ENCODE measurements at regions of chr3 and their contacts with region 1.

Region 1: GRCh38 chr3:136861890-136862616 is at the start of gene NCK1:
- DNase-seq: peak; percentile 92
- ATAC-seq: peak; percentile 94
- H3K4me3 Mint-ChIP-seq: peak within 1 kb of the TSS; percentile 93
- H3K27ac Mint-ChIP-seq: peak within 1 kb of the TSS; percentile 95
- H3K4me1 Mint-ChIP-seq: peaks cover 43% of the 10 kb centered on the region
- H3K27me3 Mint-ChIP-seq: no peaks in the 10 kb centered on the region
- CTCF ChIP-seq: no peak
- total RNA-seq, gene NCK1: 29.7 and 30.8 TPM in 2 replicates

Region 2: GRCh38 chr3:135771760-135772159 is 1090.3 kb before region 1 on chr3:
- CTCF ChIA-PET with region 1: no interaction called
- POLR2A ChIA-PET with region 1: no interaction called
- intact Hi-C with region 1: no loop called
- DNase-seq: no peak
- ATAC-seq: no peak
- H3K4me3 Mint-ChIP-seq: no peak overlapping the region
- H3K27ac Mint-ChIP-seq: no peak overlapping the region
- H3K4me1 Mint-ChIP-seq: no peaks in the 10 kb centered on the region
- H3K27me3 Mint-ChIP-seq: no peaks in the 10 kb centered on the region
- CTCF ChIP-seq: no peak

Region 3: GRCh38 chr3:136237103-136237502 is 625.0 kb before region 1 on chr3:
- CTCF ChIA-PET with region 1: no interaction called
- POLR2A ChIA-PET with region 1: no interaction called
- intact Hi-C with region 1: no loop called
- DNase-seq: no peak
- ATAC-seq: no peak
- H3K4me3 Mint-ChIP-seq: no peak overlapping the region
- H3K27ac Mint-ChIP-seq: no peak overlapping the region
- H3K4me1 Mint-ChIP-seq: no peaks in the 10 kb centered on the region
- H3K27me3 Mint-ChIP-seq: peaks cover 2% of the 10 kb centered on the region
- CTCF ChIP-seq: no peak

Region 4: GRCh38 chr3:136250226-136250902 is 611.7 kb before region 1 on chr3 and contains the start of gene PCCB:
- CTCF ChIA-PET with region 1: interaction called, 3 read pairs
- POLR2A ChIA-PET with region 1: interaction called, 3 read pairs
- intact Hi-C with region 1: loop called (anchors 1 kb)
- DNase-seq: peak; percentile 88
- ATAC-seq: peak; percentile 96
- H3K4me3 Mint-ChIP-seq: peak within 1 kb of the TSS; percentile 92
- H3K27ac Mint-ChIP-seq: peak within 1 kb of the TSS; percentile 95
- H3K4me1 Mint-ChIP-seq: peaks cover 23% of the 10 kb centered on the region
- H3K27me3 Mint-ChIP-seq: no peaks in the 10 kb centered on the region
- CTCF ChIP-seq: no peak
- total RNA-seq, gene PCCB: 31.2 and 31.8 TPM in 2 replicates

Region 5: DNA sequence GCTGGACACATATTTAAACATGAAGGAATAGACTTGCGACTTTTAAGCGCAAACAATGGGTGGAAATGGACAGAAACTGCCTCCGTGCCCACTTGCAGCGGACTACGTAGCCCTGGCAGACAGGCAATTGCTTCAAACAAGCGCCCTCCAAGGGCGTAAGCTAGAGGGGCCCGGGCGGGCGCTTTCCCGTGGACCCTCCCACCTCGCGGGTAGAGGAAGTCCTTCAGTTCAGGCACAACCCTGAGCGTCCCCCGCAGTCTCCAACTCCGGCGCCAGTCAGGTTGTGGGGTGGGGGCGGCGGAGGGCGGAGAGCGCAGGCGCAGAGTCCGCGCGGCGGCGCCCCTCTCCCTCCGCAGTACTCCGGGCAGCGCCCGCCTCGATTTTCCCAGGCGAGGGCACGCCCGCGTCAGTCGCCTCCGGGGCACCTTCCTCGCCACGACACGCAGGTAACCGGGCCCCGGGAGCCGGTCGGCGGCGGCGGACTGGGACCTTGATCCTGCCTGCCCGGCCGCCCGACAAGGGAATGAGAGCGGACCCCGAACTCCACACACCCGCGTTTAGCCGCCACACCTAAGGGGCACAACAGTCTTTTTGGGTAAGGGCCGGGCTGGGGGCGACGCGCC is 43.2 kb before region 1 on chr3 and contains the start of gene SLC35G2:
- CTCF ChIA-PET with region 1: no interaction called
- POLR2A ChIA-PET with region 1: interaction called, 11 read pairs
- intact Hi-C with region 1: loop called (anchors 1 kb)
- DNase-seq: peak; percentile 42
- ATAC-seq: peak; percentile 67
- H3K4me3 Mint-ChIP-seq: peak within 1 kb of the TSS; percentile 89
- H3K27ac Mint-ChIP-seq: peak within 1 kb of the TSS; percentile 87
- H3K4me1 Mint-ChIP-seq: peaks cover 22% of the 10 kb centered on the region
- H3K27me3 Mint-ChIP-seq: peaks cover 21% of the 10 kb centered on the region
- CTCF ChIP-seq: no peak
- total RNA-seq, gene SLC35G2: 4.2 and 4.3 TPM in 2 replicates

Region 6: GRCh38 chr3:136899622-136900158 is 37.6 kb after region 1 on chr3:
- CTCF ChIA-PET with region 1: no interaction called
- POLR2A ChIA-PET with region 1: interaction called, 5 read pairs
- intact Hi-C with region 1: loop called (anchors 5 kb)
- DNase-seq: no peak
- ATAC-seq: no peak
- H3K4me3 Mint-ChIP-seq: peak overlapping the region; percentile 29
- H3K27ac Mint-ChIP-seq: peak overlapping the region; percentile 6
- H3K4me1 Mint-ChIP-seq: peaks cover 65% of the 10 kb centered on the region
- H3K27me3 Mint-ChIP-seq: no peaks in the 10 kb centered on the region
- CTCF ChIP-seq: no peak

Region 7: DNA sequence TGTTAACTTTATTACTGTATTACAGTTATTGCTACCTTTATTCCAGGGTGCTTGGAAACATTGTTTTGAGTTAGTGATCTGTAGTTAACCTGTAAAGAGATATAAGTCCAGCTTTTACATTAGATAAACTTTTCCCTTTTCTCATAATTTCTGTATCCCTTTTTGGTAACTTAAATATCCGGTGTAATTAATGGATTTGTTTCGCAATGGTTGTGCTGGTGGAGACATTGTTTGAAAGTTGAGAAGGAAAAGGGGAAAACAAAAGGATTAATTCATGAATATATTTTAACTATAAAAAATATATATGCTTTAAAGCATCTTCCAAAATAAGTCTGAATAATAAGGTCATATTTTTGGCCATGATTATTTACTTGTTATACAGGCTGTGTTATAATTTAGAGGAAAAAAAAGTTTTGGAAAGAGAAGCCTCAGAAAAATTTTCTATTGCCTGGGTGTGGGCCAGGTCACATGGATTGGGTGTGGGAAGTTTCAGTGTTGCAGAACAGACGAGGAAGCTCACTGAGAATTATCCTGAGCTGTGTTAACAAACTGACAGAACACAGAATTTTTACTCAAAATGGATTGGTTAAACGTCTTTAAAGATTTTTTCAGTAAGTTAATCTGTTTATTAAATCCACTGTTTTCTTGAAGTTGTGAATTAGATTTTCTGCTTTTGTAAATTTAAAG is 68.1 kb after region 1 on chr3:
- CTCF ChIA-PET with region 1: no interaction called
- POLR2A ChIA-PET with region 1: interaction called, 5 read pairs
- intact Hi-C with region 1: loop called (anchors 2 kb)
- DNase-seq: no peak
- ATAC-seq: no peak
- H3K4me3 Mint-ChIP-seq: no peak overlapping the region
- H3K27ac Mint-ChIP-seq: no peak overlapping the region
- H3K4me1 Mint-ChIP-seq: peaks cover 55% of the 10 kb centered on the region
- H3K27me3 Mint-ChIP-seq: no peaks in the 10 kb centered on the region
- CTCF ChIP-seq: no peak

Measured in activated B cell treated with CpG ODN at 0.5 μM for 24 hours (primary cell).